Colonic mucosa (tissue), 4 donors: ENCODE measurements at regions of chr2 and their contacts with region 1.

Region 1: DNA sequence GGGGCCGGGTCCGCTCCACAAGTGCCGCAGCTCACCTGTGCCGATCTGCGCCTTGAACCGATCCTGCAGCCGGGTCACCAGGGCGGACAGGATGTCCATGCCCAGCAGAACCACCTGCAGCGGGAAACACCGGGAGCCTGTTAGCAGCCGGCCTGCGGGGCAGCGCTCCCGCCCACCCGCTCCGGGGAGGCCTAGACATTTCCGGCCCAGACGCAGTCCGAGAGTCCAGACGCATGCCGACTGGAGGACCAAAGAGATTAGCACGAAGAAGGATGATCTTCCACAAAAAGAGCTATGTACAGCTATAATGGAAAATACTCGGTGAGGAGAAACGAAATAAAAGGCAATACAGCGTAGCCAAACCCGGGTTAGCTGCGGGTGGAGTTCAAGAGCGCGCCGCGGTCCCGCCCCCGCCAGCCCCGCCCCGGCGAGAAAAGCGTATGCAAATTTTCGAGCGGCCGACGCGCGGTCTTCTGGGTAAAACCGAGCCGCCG is 421 bp upstream of the RNU4ATAC start:
- DNase-seq: peak; percentile 86
- H3K4me3 ChIP-seq: peak overlapping the region; percentile 76
- H3K27ac ChIP-seq: peak overlapping the region; percentile 95
- H3K4me1 ChIP-seq: no peaks in the 10 kb centered on the region
- H3K27me3 ChIP-seq: no peaks in the 10 kb centered on the region
- CTCF ChIP-seq: no peak

Region 2: DNA sequence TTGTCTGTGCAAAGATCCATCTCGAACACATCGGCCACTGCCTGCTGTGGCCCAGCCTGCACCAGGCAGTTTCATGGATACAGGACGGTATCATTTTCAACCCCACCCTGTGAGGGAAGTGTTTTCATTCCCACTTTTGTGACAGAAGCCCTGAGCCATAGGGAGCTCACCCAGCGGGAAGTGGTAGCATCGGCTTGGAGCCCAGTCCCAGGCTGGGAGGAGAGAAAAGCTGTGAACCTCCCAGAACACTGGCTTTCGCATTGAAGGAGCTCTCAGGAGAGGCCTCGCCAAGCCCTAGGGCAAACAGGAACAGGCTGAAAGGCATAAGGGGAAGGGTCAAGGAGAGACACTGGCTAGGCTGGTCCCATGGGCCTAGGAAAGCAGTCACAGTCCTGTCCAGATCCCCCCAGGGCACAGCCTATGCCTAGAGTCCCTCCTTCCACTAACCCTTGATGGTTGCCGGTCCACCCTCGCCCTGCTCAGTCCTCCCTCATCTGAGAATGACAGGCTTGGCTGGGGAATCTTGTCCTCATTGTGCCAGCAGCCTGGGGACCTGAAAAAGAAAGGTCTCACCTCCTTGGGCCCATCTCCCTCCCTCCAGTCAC is 411.2 kb before region 1 on chr2:
- intact Hi-C with region 1: no loop called
- DNase-seq: no peak
- H3K4me3 ChIP-seq: no peak overlapping the region
- H3K27ac ChIP-seq: no peak overlapping the region
- H3K4me1 ChIP-seq: no peaks in the 10 kb centered on the region
- H3K27me3 ChIP-seq: no peaks in the 10 kb centered on the region
- CTCF ChIP-seq: no peak

Region 3: GRCh38 chr2:121189011-121189410 is 341.2 kb before region 1 on chr2:
- intact Hi-C with region 1: no loop called
- DNase-seq: no peak
- H3K4me3 ChIP-seq: no peak overlapping the region
- H3K27ac ChIP-seq: no peak overlapping the region
- H3K4me1 ChIP-seq: no peaks in the 10 kb centered on the region
- H3K27me3 ChIP-seq: no peaks in the 10 kb centered on the region
- CTCF ChIP-seq: no peak

Region 4: GRCh38 chr2:121335294-121336290 is 194.7 kb before region 1 on chr2:
- intact Hi-C with region 1: no loop called
- DNase-seq: no peak
- H3K4me3 ChIP-seq: no peak overlapping the region
- H3K27ac ChIP-seq: no peak overlapping the region
- H3K4me1 ChIP-seq: peaks cover 4% of the 10 kb centered on the region
- H3K27me3 ChIP-seq: no peaks in the 10 kb centered on the region
- CTCF ChIP-seq: no peak

Region 5: GRCh38 chr2:121617042-121617599 is 86.9 kb after region 1 on chr2:
- intact Hi-C with region 1: no loop called
- DNase-seq: no peak
- H3K4me3 ChIP-seq: no peak overlapping the region
- H3K27ac ChIP-seq: no peak overlapping the region
- H3K4me1 ChIP-seq: no peaks in the 10 kb centered on the region
- H3K27me3 ChIP-seq: no peaks in the 10 kb centered on the region
- CTCF ChIP-seq: no peak

Region 6: GRCh38 chr2:121649596-121650314 is 119.5 kb after region 1 on chr2:
- intact Hi-C with region 1: loop called (anchors 5 kb)
- DNase-seq: peak; percentile 96
- H3K4me3 ChIP-seq: peak overlapping the region; percentile 87
- H3K27ac ChIP-seq: peak overlapping the region; percentile 92
- H3K4me1 ChIP-seq: peaks cover 6% of the 10 kb centered on the region
- H3K27me3 ChIP-seq: no peaks in the 10 kb centered on the region
- CTCF ChIP-seq: no peak

Region 7: DNA sequence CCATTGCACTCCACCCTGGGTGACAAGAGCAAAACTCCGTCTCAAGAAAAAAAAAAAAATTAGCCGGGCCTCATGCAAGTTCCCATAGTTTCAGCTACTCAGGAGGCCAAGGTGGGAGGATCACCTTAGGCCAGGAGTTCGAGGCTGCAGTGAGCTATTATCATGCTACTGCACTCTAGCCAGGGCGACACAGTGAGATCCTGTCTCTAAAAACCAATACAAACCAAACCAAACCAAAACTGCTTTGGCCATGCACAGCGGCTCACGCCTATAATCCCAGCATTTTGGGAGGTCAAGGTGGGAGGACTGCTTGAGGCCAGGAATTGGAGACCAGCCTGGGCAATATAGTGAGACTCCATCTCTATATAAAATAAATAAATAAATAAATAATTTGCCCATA is 187.3 kb after region 1 on chr2:
- intact Hi-C with region 1: loop called (anchors 5 kb)
- DNase-seq: no peak
- H3K4me3 ChIP-seq: no peak overlapping the region
- H3K27ac ChIP-seq: no peak overlapping the region
- H3K4me1 ChIP-seq: no peaks in the 10 kb centered on the region
- H3K27me3 ChIP-seq: no peaks in the 10 kb centered on the region
- CTCF ChIP-seq: no peak

Region 8: GRCh38 chr2:121736462-121737341 is 206.4 kb after region 1 on chr2 and contains the start of gene NIFK:
- intact Hi-C with region 1: loop called (anchors 5 kb)
- DNase-seq: peak; percentile 100
- H3K4me3 ChIP-seq: peak within 1 kb of the TSS; percentile 74
- H3K27ac ChIP-seq: peak within 1 kb of the TSS; percentile 70
- H3K4me1 ChIP-seq: no peaks in the 10 kb centered on the region
- H3K27me3 ChIP-seq: no peaks in the 10 kb centered on the region
- CTCF ChIP-seq: no peak
- total RNA-seq, gene NIFK: 32.9 to 57.7 TPM